Left lung (tissue), 14 donors: ENCODE measurements at regions of chr16 and their contacts with region 1.

Region 1: GRCh38 chr16:21300309-21301167 is 22.4 kb upstream of the CRYM start:
- DNase-seq: peak; percentile 86 to 98 (median 96)
- ATAC-seq: peak; percentile 92
- H3K4me3 ChIP-seq: peak overlapping the region; percentile 70 to 72
- H3K27ac ChIP-seq: peak overlapping the region; percentile 81 to 82
- H3K4me1 ChIP-seq: peaks cover 8 to 13% of the 10 kb centered on the region in 2 donors
- H3K27me3 ChIP-seq: peaks cover 0 to 5% of the 10 kb centered on the region in 2 donors
- CTCF ChIP-seq: peak; percentile 67 to 69

Region 2: DNA sequence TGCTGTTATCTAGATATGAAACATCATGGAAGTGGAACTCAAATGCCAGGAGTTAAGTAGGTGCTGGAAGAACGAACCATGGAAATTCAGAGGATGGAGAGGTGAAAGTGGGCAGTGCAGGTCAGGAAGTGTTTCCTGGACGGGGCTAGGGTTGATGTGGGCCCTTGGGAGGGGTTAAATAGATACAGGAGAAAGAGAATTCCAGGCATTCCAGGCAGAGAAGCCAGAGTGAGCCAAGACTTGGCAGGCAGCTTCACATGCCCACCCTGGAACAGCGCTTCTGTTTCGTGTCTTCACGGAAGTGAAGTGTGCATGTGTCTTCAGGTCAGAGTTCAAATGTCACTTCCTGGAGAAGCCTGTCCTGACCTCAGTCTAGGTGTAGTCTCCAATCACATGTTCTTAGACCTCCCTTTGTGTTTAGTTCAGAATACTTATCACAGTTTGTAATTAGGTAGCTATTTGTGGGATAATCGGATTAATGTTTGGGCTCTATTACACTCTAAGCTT is 1014.5 kb before region 1 on chr16:
- intact Hi-C with region 1: no loop called
- DNase-seq: no peak
- ATAC-seq: no peak
- H3K4me3 ChIP-seq: no peak overlapping the region
- H3K27ac ChIP-seq: no peak overlapping the region
- H3K4me1 ChIP-seq: no peaks in the 10 kb centered on the region
- H3K27me3 ChIP-seq: peaks cover 0 to 10% of the 10 kb centered on the region in 2 donors
- CTCF ChIP-seq: no peak

Region 3: DNA sequence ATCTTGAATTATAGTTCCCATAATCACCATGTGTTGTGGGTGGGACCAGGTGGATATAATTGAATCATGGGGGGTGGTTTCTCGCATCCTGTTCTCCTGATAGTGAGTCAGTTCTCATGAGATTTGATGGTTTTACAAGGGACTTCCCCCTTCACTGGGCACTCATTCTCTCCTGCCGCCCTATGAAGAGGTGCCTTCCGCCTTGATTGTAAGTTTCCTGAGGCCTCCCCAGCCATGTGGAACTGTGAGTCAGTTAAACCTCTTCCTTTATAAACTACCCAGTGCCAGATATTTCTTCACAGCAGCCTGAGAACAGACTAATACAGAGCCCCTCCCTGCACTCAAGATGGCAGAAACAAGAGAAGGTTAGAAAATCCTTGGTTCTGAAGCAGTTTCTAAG is 115.7 kb before region 1 on chr16:
- intact Hi-C with region 1: loop called in 1 of 2 experiments (anchors 10 kb)
- DNase-seq: no peak
- ATAC-seq: no peak
- H3K4me3 ChIP-seq: no peak overlapping the region
- H3K27ac ChIP-seq: no peak overlapping the region
- H3K4me1 ChIP-seq: peaks cover 0 to 5% of the 10 kb centered on the region in 2 donors
- H3K27me3 ChIP-seq: no peaks in the 10 kb centered on the region
- CTCF ChIP-seq: no peak

Region 4: DNA sequence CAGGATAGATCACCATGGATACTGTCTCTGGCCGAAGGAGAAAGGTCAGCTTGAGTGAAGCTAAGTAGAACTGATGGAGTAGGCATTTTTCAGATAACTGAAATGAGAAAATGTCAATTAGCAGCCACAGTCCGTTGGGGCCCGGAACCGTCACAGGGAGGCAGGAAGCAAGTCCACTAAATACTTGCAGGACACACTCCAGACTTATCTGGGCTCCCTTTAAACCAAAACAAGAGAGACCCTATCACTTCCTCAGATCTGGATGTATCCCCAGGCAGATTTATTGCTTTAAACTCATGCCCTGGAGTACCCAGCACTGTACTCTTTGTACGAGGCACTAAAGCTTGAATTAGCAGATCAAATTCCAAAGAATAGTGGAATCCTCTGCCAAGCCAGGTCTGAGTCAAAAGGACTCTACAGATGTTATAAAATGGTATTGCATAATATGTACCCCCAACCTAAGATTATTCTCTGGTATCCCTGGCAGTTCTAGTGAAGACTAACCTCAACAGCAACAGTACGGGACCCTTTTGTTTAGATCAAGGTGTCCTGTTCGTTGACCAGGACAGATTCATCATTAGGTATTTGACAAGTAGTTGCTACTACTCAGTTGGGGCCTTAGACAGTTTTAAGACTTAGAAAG is 97.3 kb before region 1 on chr16:
- intact Hi-C with region 1: no loop called
- DNase-seq: no peak
- ATAC-seq: no peak
- H3K4me3 ChIP-seq: no peak overlapping the region
- H3K27ac ChIP-seq: no peak overlapping the region
- H3K4me1 ChIP-seq: no peaks in the 10 kb centered on the region
- H3K27me3 ChIP-seq: no peaks in the 10 kb centered on the region
- CTCF ChIP-seq: no peak